ENCODE measurements at regions of chr18 and their contacts with region 1.

Region 1: DNA sequence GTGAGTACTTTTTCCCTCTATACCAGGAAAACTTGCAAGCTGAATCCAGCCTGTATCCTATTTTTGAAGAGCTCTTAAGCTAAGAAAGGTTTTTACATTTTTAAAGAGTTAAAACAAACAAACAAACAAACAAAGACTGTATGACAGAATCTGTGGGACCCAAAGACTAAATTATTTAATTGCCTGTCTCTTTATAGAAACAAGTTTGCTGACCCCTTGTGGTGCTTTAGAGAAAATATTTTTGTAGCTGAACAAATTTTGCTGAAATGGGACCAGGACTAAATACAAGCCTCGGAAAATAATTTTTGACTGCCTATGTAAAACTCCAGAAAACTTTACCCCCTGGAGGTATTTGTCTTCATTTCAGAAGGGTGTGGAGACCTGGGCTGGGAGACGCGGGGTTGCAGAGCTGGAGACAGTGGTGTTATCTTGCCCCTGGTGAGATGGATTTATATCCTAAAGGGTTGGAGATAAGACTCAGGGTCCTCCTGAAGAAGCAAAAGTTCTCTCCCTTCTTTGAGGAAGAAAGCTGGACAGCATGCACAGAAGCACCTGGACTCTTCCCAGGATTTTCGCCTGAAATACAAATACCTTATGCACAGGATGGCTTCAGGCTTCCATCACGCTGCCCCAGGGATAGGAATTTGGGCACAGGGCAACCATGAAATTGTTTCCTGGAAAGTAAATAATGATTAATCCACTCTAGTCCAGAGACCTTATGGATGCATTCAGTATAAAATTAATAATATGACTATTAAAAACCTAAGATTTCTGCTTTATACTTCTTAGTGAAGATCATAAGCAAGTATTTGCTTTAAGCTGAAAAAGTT is 54.3 kb downstream of the TMX3 start:
- DNase-seq: no peak
- ATAC-seq: peak; percentile 56
- H3K4me3 ChIP-seq: no peak overlapping the region
- H3K27ac ChIP-seq: no peak overlapping the region
- H3K4me1 ChIP-seq: no peaks in the 10 kb centered on the region
- H3K27me3 ChIP-seq: no peaks in the 10 kb centered on the region; a peak in 1 of 4 replicates
- CTCF ChIP-seq: peak; percentile 42 to 52 (median 45); a peak in 5 of 6 replicates
- EP300 ChIP-seq: no peak
- POLR2A ChIP-seq: no peak
- RAD21 ChIP-seq: peak; percentile 61

Region 2: DNA sequence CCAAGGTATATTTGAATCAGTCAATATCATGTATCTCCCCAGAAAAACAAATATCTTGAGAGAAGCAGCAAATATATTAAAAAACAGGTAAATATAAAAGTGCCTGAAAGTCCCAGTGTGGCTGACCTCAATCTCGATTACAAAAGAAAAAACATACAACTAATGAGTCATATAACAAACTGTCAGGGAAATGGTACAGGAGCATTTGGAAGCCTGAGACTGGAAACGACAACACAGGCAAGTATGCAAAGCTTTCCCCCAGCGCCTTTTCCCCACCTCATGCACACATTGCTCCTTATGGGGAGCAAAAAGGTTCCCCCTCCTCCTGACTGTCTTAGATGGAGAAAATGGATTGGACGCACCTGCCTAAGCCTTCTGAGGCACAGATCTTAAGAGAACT is 176.3 kb before region 1 on chr18:
- CTCF ChIA-PET with region 1: no interaction called
- POLR2A ChIA-PET with region 1: no interaction called
- RAD21 ChIA-PET with region 1: no interaction called
- SMC1A ChIA-PET with region 1: no interaction called
- in situ Hi-C with region 1: no loop called
- intact Hi-C with region 1: no loop called
- DNase-seq: no peak
- ATAC-seq: no peak
- H3K4me3 ChIP-seq: no peak overlapping the region
- H3K27ac ChIP-seq: no peak overlapping the region
- H3K4me1 ChIP-seq: no peaks in the 10 kb centered on the region
- H3K27me3 ChIP-seq: no peaks in the 10 kb centered on the region
- CTCF ChIP-seq: no peak
- EP300 ChIP-seq: no peak
- POLR2A ChIP-seq: no peak
- RAD21 ChIP-seq: no peak

Region 3: DNA sequence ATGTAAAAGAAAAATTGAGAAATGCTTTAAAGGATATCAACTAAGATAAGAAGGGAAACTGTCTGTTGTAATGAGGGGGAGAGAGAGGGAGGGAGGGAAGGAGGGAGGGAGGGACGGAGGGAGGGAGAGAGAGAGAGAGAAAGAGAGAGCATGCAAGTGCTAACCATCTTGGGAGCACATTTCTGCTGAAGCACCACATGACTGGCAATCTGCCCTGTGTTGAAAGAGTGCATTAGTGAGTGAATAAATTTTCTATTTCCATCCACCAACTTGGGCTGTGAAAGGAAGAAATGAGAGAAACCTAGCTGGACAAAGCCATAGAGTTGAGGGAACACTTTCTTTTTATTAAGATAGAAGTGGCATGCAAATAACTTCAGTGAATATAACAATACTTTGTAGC is 56.3 kb before region 1 on chr18:
- CTCF ChIA-PET with region 1: no interaction called
- POLR2A ChIA-PET with region 1: no interaction called
- RAD21 ChIA-PET with region 1: no interaction called
- SMC1A ChIA-PET with region 1: no interaction called
- in situ Hi-C with region 1: no loop called
- intact Hi-C with region 1: no loop called
- DNase-seq: no peak
- ATAC-seq: no peak
- H3K4me3 ChIP-seq: no peak overlapping the region
- H3K27ac ChIP-seq: no peak overlapping the region
- H3K4me1 ChIP-seq: no peaks in the 10 kb centered on the region
- H3K27me3 ChIP-seq: no peaks in the 10 kb centered on the region
- CTCF ChIP-seq: no peak
- EP300 ChIP-seq: no peak
- POLR2A ChIP-seq: no peak
- RAD21 ChIP-seq: no peak

Region 4: DNA sequence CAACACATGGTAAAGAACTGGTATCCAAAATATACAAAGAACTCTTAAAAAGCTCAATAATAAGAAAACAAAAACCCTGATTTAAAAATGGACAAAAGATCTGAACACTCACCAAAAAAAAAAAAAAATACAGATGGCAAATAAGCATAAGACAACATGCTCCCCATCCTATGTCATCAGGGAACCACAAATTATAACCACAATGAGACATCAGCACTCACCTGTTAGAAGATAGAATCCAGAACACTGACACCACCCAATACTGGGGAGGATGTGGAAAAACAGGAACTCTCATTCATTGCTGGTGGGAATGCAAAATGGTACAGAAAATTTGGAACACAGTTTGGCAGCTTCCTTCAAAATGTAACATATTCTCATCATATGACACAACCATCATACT is 12.4 kb before region 1 on chr18:
- CTCF ChIA-PET with region 1: interaction called, 16 read pairs
- POLR2A ChIA-PET with region 1: no interaction called
- RAD21 ChIA-PET with region 1: interaction called, 3 read pairs
- SMC1A ChIA-PET with region 1: interaction called, 10 read pairs
- in situ Hi-C with region 1: no loop called
- intact Hi-C with region 1: no loop called
- DNase-seq: no peak
- ATAC-seq: no peak
- H3K4me3 ChIP-seq: no peak overlapping the region
- H3K27ac ChIP-seq: no peak overlapping the region
- H3K4me1 ChIP-seq: no peaks in the 10 kb centered on the region
- H3K27me3 ChIP-seq: no peaks in the 10 kb centered on the region
- CTCF ChIP-seq: no peak
- EP300 ChIP-seq: no peak
- POLR2A ChIP-seq: no peak
- RAD21 ChIP-seq: no peak

Region 5: GRCh38 chr18:68735483-68736343 is 75.1 kb after region 1 on chr18:
- CTCF ChIA-PET with region 1: interaction called, 6 read pairs
- POLR2A ChIA-PET with region 1: no interaction called
- RAD21 ChIA-PET with region 1: no interaction called
- SMC1A ChIA-PET with region 1: interaction called, 5 read pairs
- in situ Hi-C with region 1: no loop called
- intact Hi-C with region 1: loop called (anchors 5 kb)
- DNase-seq: no peak
- ATAC-seq: peak; percentile 84
- H3K4me3 ChIP-seq: no peak overlapping the region
- H3K27ac ChIP-seq: no peak overlapping the region
- H3K4me1 ChIP-seq: no peaks in the 10 kb centered on the region
- H3K27me3 ChIP-seq: no peaks in the 10 kb centered on the region
- CTCF ChIP-seq: peak; percentile 75 to 81 (median 79)
- EP300 ChIP-seq: no peak
- POLR2A ChIP-seq: no peak
- RAD21 ChIP-seq: peak; percentile 97